ENCODE measurements at regions of chr5 and their contacts with region 1.

Region 1: GRCh38 chr5:114449860-114450421 is 88.1 kb downstream of the KCNN2 start:
- DNase-seq: peak; percentile 79
- H3K4me3 ChIP-seq: no peak overlapping the region
- H3K27ac ChIP-seq: no peak overlapping the region
- H3K4me1 ChIP-seq: peaks cover 0 to 7% (median 0%) of the 10 kb centered on the region in 6 donors
- H3K27me3 ChIP-seq: peaks cover 0 to 11% (median 0%) of the 10 kb centered on the region in 7 donors
- CTCF ChIP-seq: peak in 10 of 11 experiments; percentile 23 to 79 (median 65)
- POLR2A ChIP-seq: no peak

Region 2: GRCh38 chr5:113612060-113612496 is 837.9 kb before region 1 on chr5:
- intact Hi-C with region 1: loop called (anchors 5 kb)
- DNase-seq: no peak
- H3K4me3 ChIP-seq: no peak overlapping the region
- H3K27ac ChIP-seq: no peak overlapping the region
- H3K4me1 ChIP-seq: peaks cover 3 to 18% (median 6%) of the 10 kb centered on the region in 6 donors
- H3K27me3 ChIP-seq: peaks cover 0 to 9% (median 0%) of the 10 kb centered on the region in 7 donors
- CTCF ChIP-seq: peak; percentile 18 to 76 (median 62)
- POLR2A ChIP-seq: no peak

Region 3: DNA sequence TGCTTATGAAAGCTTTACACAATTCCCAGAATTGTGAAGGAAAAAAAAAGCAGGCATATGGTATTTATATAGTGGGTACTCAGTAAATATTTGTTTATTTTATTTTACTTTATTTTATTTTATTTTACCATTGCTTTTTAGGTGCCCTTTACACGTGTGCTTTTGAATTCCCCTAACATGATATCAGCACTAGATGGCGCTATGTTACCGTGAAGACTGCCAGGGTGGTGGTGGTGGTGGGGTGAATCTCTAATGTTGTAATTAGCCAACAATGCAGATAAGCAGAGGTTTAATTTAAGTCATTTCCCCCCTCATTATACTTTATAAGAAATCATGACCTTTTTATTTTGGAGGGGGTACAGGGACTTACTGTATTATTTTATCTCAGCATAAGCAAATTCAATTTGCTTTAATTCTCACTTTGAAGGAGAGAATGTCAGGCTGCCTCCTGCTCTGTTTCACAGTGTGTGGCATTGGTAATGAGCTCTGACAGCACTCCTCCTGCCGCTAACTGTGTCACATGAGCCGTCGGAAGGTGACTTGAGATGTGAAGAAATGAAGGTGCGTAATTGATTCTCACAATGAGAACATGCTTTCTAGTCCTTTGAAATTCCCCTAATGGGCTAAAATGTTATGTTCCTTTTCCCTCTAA is 770.9 kb before region 1 on chr5:
- intact Hi-C with region 1: loop called (anchors 5 kb)
- DNase-seq: no peak
- H3K4me3 ChIP-seq: no peak overlapping the region
- H3K27ac ChIP-seq: no peak overlapping the region
- H3K4me1 ChIP-seq: no peaks in the 10 kb centered on the region
- H3K27me3 ChIP-seq: no peaks in the 10 kb centered on the region
- CTCF ChIP-seq: peak in 8 of 11 experiments; percentile 50 to 69 (median 60)
- POLR2A ChIP-seq: no peak

Region 4: GRCh38 chr5:114101153-114101552 is 348.8 kb before region 1 on chr5:
- intact Hi-C with region 1: loop called (anchors 5 kb)
- DNase-seq: no peak
- H3K4me3 ChIP-seq: no peak overlapping the region
- H3K27ac ChIP-seq: no peak overlapping the region
- H3K4me1 ChIP-seq: no peaks in the 10 kb centered on the region
- H3K27me3 ChIP-seq: no peaks in the 10 kb centered on the region
- CTCF ChIP-seq: peak in 8 of 11 experiments; percentile 14 to 53 (median 37)
- POLR2A ChIP-seq: no peak